Left colon (tissue), 2 donors: ENCODE measurements at regions of chr10 and their contacts with region 1.

Region 1: GRCh38 chr10:88401671-88402347 is 181.3 kb downstream of the RNLS start:
- DNase-seq: no peak
- ATAC-seq: no peak

Region 2: DNA sequence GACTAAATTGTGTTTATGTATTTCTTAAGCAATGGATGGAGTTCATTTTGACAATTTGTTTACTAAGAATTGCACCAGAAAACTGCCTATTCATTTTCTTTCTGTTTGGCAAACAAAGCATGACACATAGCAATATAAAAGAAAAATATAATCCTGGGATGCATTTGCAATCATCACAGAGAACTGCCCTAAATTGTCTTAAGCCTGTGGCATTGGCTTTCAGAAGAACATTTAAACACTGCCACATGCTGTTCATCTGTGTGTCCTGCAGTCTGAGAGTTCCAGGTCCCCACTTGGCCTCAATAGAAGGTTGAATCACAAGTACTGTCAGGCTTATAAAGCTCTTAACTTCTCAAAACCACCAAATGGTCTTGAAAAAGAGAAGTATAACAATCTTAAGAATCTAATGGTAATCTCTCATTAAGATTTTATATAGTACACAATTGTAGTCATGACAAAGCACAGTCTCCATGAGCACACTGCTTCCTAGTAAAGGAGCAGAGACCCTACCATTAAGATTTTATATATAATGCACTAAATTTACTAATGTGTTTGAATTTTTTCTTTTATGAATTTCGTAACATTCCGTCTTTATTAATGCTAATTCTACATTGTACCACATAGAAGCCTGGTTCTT is 151.4 kb after region 1 on chr10:
- intact Hi-C with region 1: loop called in 1 of 2 experiments (anchors 10 kb)
- DNase-seq: peak; percentile 33 to 34
- ATAC-seq: peak; percentile 96